Activated CD4-positive, alpha-beta T cell treated with anti-CD3 and anti-CD28 coated beads, Interleukin-2, amount 10 ng/mL, durations not matched to agents 24 days and 14 days (primary cell): ENCODE measurements at regions of chr7 and their contacts with region 1.

Region 1: GRCh38 chr7:73774923-73775322 is 4.9 kb upstream of the CLDN3 start:
- DNase-seq: no peak
- H3K4me3 Mint-ChIP-seq: no peak overlapping the region
- H3K27ac Mint-ChIP-seq: no peak overlapping the region
- H3K4me1 Mint-ChIP-seq: peaks cover 3% of the 10 kb centered on the region
- H3K27me3 Mint-ChIP-seq: peaks cover 16% of the 10 kb centered on the region

Region 2: DNA sequence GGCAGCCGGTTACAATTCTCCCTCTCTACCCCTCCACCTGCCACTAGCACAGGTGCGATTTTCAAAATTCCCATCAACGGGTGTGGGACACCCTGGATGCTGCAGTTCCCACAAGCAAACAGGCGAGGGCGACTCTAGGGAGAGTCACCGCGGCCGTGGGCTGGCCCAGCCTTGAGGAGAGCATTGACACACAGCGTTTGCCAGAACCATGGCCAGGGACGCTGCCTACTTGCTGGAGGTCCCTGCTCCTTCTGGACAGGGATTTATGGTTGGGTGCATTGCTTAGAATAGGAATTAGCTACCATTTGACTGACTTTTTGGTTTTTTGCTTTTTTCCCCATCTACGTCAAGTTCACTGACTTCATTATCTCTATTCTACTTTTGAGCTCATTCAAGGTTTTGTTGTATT is 36.8 kb after region 1 on chr7:
- intact Hi-C with region 1: loop called (anchors 2 kb)
- DNase-seq: peak; percentile 86
- H3K4me3 Mint-ChIP-seq: no peak overlapping the region
- H3K27ac Mint-ChIP-seq: no peak overlapping the region
- H3K4me1 Mint-ChIP-seq: peaks cover 1% of the 10 kb centered on the region
- H3K27me3 Mint-ChIP-seq: peaks cover 5% of the 10 kb centered on the region